A673 (cell line): ENCODE measurements at regions of chrX and their contacts with region 1.

Region 1: GRCh38 chrX:71283403-71284143 is at the start of gene NONO:
- DNase-seq: peak; percentile 98
- H3K4me3 ChIP-seq: peak within 1 kb of the TSS; percentile 72
- H3K27ac ChIP-seq: peak within 1 kb of the TSS; percentile 98
- H3K4me1 ChIP-seq: peaks cover 4% of the 10 kb centered on the region
- H3K27me3 ChIP-seq: no peaks in the 10 kb centered on the region
- CTCF ChIP-seq: 0 out of 2 replicates have a peak, but pooled peaks have one; percentile 18
- total RNA-seq, gene NONO: 705 and 792 TPM in 2 replicates

Region 2: GRCh38 chrX:70960728-70961127 is 322.8 kb before region 1 on chrX:
- CTCF ChIA-PET with region 1: no interaction called
- POLR2A ChIA-PET with region 1: no interaction called
- intact Hi-C with region 1: no loop called
- DNase-seq: peak; percentile 35
- H3K4me3 ChIP-seq: no peak overlapping the region
- H3K27ac ChIP-seq: no peak overlapping the region
- H3K4me1 ChIP-seq: no peaks in the 10 kb centered on the region
- H3K27me3 ChIP-seq: no peaks in the 10 kb centered on the region
- CTCF ChIP-seq: peak; percentile 49

Region 3: GRCh38 chrX:71198066-71198465 is 85.5 kb before region 1 on chrX:
- CTCF ChIA-PET with region 1: no interaction called
- POLR2A ChIA-PET with region 1: interaction called, 16 read pairs
- intact Hi-C with region 1: no loop called
- DNase-seq: no peak
- H3K4me3 ChIP-seq: no peak overlapping the region
- H3K27ac ChIP-seq: no peak overlapping the region
- H3K4me1 ChIP-seq: no peaks in the 10 kb centered on the region
- H3K27me3 ChIP-seq: no peaks in the 10 kb centered on the region
- CTCF ChIP-seq: no peak

Region 4: GRCh38 chrX:71227370-71228062 is 56.1 kb before region 1 on chrX:
- CTCF ChIA-PET with region 1: no interaction called
- POLR2A ChIA-PET with region 1: no interaction called
- intact Hi-C with region 1: no loop called
- DNase-seq: no peak
- H3K4me3 ChIP-seq: no peak overlapping the region
- H3K27ac ChIP-seq: no peak overlapping the region
- H3K4me1 ChIP-seq: no peaks in the 10 kb centered on the region
- H3K27me3 ChIP-seq: no peaks in the 10 kb centered on the region
- CTCF ChIP-seq: 0 out of 2 replicates have a peak, but pooled peaks have one; percentile 27